ENCODE measurements at regions of chr19 and their contacts with region 1.

Region 1: GRCh38 chr19:13718733-13719132 is 45.6 kb upstream of the MRI1 start:
- DNase-seq: peak; percentile 87
- H3K4me3 ChIP-seq: no peak overlapping the region
- H3K27ac ChIP-seq: no peak overlapping the region
- H3K4me1 ChIP-seq: peaks cover 6% of the 10 kb centered on the region; the same call in 1 of the 2 replicates
- H3K27me3 ChIP-seq: no peaks in the 10 kb centered on the region

Region 2: DNA sequence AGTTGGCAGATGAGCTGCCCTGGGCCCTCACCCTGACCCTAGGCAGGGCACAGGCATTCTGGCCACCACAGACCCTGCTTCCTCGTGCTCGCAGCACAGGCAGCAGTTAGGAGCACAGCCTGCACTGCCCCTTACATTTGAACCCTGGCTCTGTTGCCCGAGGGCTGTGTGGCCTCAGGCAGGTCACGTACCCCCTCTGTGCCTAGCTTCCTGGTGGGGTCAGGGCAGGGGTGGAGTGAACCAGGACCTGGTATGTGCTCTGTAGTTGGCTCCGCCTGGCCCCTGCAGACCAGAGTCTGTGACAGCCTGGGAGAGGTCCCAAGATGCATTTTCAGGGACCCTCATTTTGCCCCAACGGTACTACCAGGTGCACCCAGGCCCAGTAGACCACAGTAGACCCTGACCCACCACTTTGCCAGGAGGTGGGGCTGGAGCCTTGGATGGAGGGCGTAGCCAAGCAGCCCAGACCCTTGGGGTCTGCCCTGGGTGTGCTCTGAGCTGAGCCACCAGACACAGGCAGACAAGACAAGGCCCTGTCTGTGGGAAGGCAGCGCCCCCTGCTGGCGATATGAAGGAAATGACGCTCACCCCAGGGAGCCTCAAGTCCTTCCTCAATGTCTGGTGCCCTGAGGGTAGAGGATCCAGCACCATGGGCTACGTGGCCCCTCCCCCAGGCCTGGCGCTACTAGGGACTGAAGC is 625.2 kb before region 1 on chr19:
- in situ Hi-C with region 1: no loop called
- DNase-seq: peak; percentile 83
- H3K4me3 ChIP-seq: no peak overlapping the region
- H3K27ac ChIP-seq: peak overlapping the region; percentile 78
- H3K4me1 ChIP-seq: peaks cover 27% of the 10 kb centered on the region
- H3K27me3 ChIP-seq: no peaks in the 10 kb centered on the region

Region 3: DNA sequence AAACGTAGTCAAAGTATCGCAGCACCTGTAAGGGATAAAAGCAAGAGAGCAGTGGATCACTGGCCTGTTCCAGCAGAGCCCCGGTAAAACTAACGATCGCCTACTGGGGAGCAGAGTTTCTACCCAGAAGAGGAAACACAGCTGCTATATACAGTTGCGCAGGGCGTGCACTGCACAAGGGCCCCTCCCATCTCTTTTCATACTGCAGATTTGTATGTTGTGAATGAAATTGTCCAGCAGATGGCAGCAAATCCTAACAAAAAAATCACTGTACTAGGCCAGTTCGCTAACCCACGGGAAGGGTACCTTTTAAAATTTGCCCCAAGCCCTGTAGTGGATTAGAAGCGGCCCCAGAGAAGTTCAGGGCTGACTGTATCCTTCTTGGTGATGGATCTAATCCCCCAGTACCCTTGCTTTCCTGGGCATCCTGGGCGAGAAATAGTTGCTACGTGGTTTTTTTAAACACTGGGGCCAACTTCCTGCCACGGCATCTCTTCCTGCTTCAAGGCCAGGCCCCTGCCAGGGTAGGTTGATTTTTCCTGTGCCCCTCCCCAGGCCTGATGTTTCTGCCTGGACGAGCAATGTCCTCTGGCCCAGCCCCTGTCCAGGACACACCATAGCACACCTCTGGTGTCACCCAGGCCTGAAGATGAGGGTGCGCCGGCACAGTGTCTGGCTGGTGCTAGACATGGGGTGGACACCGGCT is 441.5 kb before region 1 on chr19:
- in situ Hi-C with region 1: loop called (anchors 10 kb)
- DNase-seq: peak; percentile 81
- H3K4me3 ChIP-seq: no peak overlapping the region
- H3K27ac ChIP-seq: no peak overlapping the region
- H3K4me1 ChIP-seq: peaks cover 4% of the 10 kb centered on the region; the same call in 1 of the 2 replicates
- H3K27me3 ChIP-seq: no peaks in the 10 kb centered on the region

Region 4: DNA sequence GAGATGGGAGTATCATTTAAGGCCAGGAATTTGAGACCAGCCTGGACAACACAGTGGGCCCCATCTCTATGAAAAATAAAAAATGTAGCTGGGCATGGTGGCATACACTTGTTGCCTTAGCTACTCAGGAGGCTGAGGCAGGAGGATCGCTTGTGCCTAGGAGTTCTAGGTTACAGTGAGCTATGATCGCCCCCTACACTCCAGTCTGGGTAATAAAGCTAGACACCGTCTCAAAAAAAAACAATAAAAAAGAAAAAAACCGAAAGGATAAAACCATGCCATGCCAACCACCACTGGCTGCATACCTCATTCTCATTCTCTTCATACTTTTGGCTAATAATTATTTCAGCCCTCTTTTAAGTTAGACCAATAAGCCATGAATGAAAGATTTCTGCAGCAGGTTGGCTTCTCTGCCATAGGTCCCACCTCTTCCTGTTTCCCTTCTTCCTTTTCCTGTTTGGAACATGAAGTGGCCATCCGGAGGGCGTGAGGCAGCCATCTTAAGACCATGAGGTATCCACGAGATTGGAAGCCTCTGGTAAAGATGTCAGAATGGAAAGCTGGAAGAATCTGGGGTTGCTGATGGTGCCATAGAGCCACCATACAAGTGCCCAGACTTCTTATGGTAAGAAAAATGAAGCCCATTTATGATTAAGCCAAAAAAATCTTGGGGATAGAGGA is 383.8 kb before region 1 on chr19:
- in situ Hi-C with region 1: no loop called
- DNase-seq: no peak
- H3K4me3 ChIP-seq: no peak overlapping the region
- H3K27ac ChIP-seq: no peak overlapping the region
- H3K4me1 ChIP-seq: no peaks in the 10 kb centered on the region
- H3K27me3 ChIP-seq: no peaks in the 10 kb centered on the region; the same call in 1 of the 2 replicates

Region 5: GRCh38 chr19:13604902-13605586 is 113.7 kb before region 1 on chr19:
- in situ Hi-C with region 1: loop called (anchors 5 kb)
- DNase-seq: no peak
- H3K4me3 ChIP-seq: no peak overlapping the region
- H3K27ac ChIP-seq: no peak overlapping the region
- H3K4me1 ChIP-seq: no peaks in the 10 kb centered on the region
- H3K27me3 ChIP-seq: no peaks in the 10 kb centered on the region

Region 6: GRCh38 chr19:13825489-13826391 is 107.0 kb after region 1 on chr19:
- in situ Hi-C with region 1: no loop called
- DNase-seq: peak; percentile 78
- H3K4me3 ChIP-seq: no peak overlapping the region
- H3K27ac ChIP-seq: no peak overlapping the region
- H3K4me1 ChIP-seq: peaks cover 16% of the 10 kb centered on the region
- H3K27me3 ChIP-seq: no peaks in the 10 kb centered on the region